Body of pancreas (tissue), 4 donors: ENCODE measurements at regions of chr9 and their contacts with region 1.

Region 1: DNA sequence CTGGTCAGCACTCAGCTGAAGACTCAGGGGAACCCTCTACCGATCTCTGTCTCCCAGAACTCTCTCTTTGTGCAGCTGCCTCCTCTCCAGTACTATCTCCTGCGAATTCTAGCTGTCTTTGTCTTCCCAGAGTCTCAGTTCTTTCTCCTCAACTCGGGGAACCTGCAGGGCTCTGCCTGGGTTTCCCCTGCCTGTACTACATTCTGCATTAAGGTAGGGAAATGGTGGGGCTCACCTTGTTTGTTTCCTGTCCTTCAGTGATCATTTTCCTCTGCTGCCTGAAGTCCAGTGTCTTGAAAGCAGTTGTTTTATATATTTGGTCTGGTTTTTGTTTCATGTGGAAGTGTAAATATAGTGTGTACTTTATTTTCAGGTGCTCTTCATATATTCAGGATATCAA is 43.1 kb upstream of the IGFBPL1 start:
- DNase-seq: no peak
- ATAC-seq: no peak
- H3K4me3 ChIP-seq: no peak overlapping the region
- H3K27ac ChIP-seq: no peak overlapping the region
- H3K4me1 ChIP-seq: peaks cover 8% of the 10 kb centered on the region
- H3K27me3 ChIP-seq: no peaks in the 10 kb centered on the region
- CTCF ChIP-seq: no peak
- POLR2A ChIP-seq: no peak

Region 2: GRCh38 chr9:38518826-38519225 is 51.4 kb after region 1 on chr9:
- intact Hi-C with region 1: loop called (anchors 5 kb)
- DNase-seq: no peak
- ATAC-seq: no peak
- H3K4me3 ChIP-seq: no peak overlapping the region
- H3K27ac ChIP-seq: no peak overlapping the region
- H3K4me1 ChIP-seq: no peaks in the 10 kb centered on the region
- H3K27me3 ChIP-seq: no peaks in the 10 kb centered on the region
- CTCF ChIP-seq: no peak
- POLR2A ChIP-seq: no peak